Left cardiac atrium (tissue), 4 donors: ENCODE measurements at regions of chrX and their contacts with region 1.

Region 1: DNA sequence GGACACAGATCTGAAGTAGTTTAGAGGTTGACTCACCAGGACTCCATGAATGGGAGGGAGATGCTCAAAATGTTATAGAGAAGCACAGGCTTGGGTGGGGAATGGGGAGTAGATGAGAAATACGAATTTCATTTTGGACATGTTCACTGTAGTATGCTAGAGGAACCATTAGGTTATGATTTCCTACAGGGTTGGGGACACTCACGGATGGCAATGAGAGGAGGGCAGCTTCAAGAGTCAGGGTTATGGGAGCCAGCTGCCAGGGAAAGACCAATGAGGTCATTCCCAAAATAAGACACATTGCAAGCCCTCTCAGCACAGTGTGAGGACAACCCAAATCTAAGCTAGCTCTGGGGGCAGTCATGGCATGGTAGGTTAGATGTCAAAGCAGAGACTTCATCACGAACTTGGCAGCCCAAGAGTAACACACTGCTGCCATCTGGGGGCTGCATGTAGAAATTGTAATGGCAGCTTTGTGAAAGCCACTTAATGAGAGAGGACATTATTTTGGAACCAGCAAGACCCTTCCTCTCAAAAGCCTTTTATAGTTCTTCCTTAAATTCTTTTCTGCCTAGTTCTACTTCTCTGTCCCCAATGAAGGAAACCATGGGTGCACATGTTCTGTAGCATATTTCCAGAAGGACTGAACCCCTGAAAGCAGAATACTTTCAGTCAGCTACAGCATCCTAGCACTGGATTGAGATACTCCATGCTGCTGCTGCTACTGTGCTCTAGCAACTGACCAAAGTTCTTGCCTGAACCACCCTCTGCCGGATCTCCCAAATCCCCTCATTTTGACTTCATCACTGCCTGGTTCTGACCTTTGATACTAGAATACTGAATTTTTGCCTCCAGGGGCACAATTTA is 16.2 kb upstream of the ZCCHC12 start:
- DNase-seq: no peak
- ATAC-seq: peak; percentile 58 to 61

Region 2: DNA sequence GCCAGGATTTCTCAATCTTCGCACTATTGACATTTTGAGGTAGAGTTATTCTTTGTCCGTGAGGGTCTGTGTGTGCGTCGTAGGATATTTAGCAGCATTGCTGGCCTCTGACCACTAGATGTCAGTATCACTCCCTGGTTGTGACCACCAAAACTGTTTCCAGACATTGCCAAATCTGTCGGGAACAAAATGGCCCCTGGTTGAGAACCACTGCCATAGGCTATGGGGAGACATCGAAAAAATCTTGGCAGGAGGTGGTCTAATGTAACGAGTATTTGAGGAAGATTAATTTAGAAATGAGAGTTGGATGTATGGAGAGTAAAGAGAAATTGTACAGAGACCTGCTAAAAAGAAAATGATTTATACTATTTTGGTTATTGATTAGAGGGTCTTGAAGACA is 203.4 kb before region 1 on chrX:
- intact Hi-C with region 1: loop called in 1 of 2 experiments (anchors 10 kb)
- DNase-seq: peak; percentile 26
- ATAC-seq: peak; percentile 38 to 54

Region 3: GRCh38 chrX:118637997-118638396 is 169.4 kb before region 1 on chrX:
- intact Hi-C with region 1: loop called (anchors 5 to 10 kb)
- DNase-seq: no peak
- ATAC-seq: no peak

Region 4: DNA sequence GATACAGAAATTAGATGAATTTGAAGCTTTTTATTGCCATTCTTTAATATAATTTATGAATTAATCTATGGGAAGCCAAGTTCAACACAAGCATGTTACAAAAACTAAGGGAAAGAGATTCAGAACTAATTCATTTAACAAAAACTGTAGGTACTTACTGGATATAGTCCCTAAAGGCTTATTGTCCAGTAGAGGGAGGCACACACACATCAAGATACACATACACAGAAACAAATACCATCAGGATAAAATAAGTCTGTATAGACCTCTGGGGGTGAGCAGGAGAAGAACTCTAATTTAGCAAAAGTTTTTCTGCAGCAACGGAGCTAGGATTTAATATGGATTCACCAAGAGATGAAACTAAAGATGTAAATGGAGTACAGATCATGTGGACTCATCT is 163.0 kb before region 1 on chrX:
- intact Hi-C with region 1: loop called (anchors 5 to 10 kb)
- DNase-seq: no peak
- ATAC-seq: no peak

Region 5: DNA sequence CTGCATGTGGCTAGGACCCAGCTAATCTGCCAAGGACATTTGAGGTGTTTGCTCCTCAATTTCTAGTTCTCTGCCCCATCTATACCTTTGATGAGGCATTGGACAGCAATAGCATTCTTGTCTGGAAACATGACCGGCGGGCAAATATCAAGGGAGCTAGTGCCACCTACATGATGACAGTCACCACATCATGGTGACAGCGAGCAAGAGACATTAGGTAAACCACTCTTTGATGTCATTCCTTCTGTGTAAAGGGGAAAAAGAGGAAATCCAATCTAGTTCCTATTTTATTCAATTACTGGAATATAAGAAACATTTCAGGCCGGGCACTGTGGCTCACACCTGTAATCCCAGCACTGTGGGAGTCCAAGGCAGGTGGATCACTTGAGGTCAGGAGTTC is 100.7 kb before region 1 on chrX:
- intact Hi-C with region 1: no loop called
- DNase-seq: no peak
- ATAC-seq: no peak

Region 6: GRCh38 chrX:118974088-118974907 is 166.9 kb after region 1 on chrX and contains the start of gene LONRF3:
- intact Hi-C with region 1: no loop called
- DNase-seq: peak; percentile 83
- ATAC-seq: peak; percentile 74 to 80
- total RNA-seq, gene LONRF3: 3.9 to 5.5 TPM